ENCODE measurements at regions of chr1 and their contacts with region 1.

Region 1: GRCh38 chr1:23344111-23344986 is at the start of gene HNRNPR:
- DNase-seq: peak; percentile 96

Region 2: DNA sequence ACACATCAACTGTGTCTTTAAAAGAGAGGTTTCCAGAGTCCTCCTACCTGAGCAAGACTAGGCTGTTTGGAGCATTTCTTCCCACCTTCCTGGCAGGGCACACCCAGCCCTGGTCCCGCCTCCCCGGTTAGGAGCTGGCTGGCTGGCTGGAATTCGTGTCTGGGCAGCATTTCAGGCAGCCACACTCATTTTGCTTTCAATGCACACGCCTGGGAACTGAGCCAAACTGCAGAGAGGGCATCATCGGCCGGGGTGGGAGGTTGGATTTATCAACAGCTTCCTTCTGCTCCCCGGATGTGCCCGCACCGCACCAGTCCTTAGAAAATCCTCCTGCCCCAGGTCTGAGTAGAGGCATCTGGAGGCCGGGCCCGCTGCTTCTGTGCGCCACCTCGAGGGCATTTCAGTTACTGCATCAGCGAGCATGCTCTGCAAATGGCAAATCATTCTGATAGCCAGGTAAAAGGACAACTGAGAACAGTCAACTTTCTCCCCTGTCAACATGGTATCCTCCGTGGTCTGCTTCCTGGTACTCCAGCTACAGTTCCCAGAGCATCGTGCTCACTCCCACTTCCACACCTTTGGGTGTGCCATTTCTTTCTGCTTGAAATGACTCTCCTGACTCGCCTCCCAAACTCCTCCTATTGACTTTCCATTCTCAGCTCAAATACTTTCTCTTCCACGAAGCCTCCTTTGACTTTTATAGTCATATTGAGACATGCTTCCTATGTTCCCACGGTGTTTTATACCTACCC is 59.6 kb after region 1 on chr1:
- CTCF ChIA-PET with region 1: interaction called, 8 read pairs
- POLR2A ChIA-PET with region 1: interaction called, 25 read pairs
- DNase-seq: peak; percentile 89

Region 3: GRCh38 chr1:23434260-23434811 is 90.0 kb after region 1 on chr1:
- CTCF ChIA-PET with region 1: no interaction called
- POLR2A ChIA-PET with region 1: no interaction called
- DNase-seq: no peak